HEK293T (cell line): ENCODE measurements at regions of chrX and their contacts with region 1.

Region 1: GRCh38 chrX:24838629-24839028 is 144.9 kb downstream of the POLA1 start:
- DNase-seq: peak; percentile 15

Region 2: GRCh38 chrX:24858004-24858746 is 19.5 kb after region 1 on chrX:
- CTCF ChIA-PET with region 1: no interaction called
- POLR2A ChIA-PET with region 1: no interaction called
- DNase-seq: no peak

Region 3: GRCh38 chrX:25096522-25097045 is 258.0 kb after region 1 on chrX:
- CTCF ChIA-PET with region 1: no interaction called
- POLR2A ChIA-PET with region 1: no interaction called
- DNase-seq: no peak

Region 4: GRCh38 chrX:25144043-25144940 is 305.7 kb after region 1 on chrX:
- CTCF ChIA-PET with region 1: interaction called, 11 read pairs
- POLR2A ChIA-PET with region 1: no interaction called
- DNase-seq: peak; percentile 59